HCT116 (cell line): ENCODE measurements at regions of chr22 and their contacts with region 1.

Region 1: GRCh38 chr22:29154364-29155048 is 51.2 kb upstream of the EMID1 start:
- DNase-seq: peak; percentile 34
- ATAC-seq: peak; percentile 92
- H3K4me3 ChIP-seq: peak overlapping the region; percentile 9 to 17; a peak in 3 of 4 replicates
- H3K27ac ChIP-seq: no peak overlapping the region
- H3K4me1 ChIP-seq: peaks cover 3 to 8% of the 10 kb centered on the region in 2 experiments; a peak in 2 of 4 replicates
- H3K27me3 ChIP-seq: no peaks in the 10 kb centered on the region
- CTCF ChIP-seq: peak; percentile 75 to 94 (median 93)
- POLR2A ChIP-seq: no peak
- RAD21 ChIP-seq: peak; percentile 82

Region 2: DNA sequence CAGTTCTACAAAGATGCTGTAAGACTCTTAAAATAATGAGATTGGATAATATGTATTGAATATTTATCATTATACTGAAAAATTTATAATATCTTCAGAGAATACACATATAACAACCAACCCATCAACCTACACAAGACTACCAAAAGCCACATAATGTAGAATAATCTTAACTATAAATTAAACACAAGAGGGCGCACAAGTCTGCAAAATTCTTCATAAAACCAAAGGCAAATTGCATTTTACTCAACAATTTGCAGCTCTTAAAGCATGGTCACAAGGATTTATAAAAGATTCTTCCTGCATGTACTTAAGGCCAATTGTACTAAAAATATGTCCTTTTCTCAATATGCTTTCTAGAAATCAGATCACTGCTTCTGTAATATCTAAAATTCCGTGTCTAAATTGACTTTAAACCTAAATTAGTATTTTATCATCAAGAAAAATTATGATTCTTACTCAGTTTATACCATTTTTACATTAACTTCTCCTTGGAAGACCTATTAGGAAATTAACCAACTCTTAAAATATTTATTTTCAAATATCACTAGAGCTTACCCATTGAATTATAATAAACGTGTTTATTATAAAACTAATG is 553.9 kb before region 1 on chr22:
- CTCF ChIA-PET with region 1: interaction called, 7 read pairs
- POLR2A ChIA-PET with region 1: no interaction called
- RAD21 ChIA-PET with region 1: interaction called in 1 of 2 experiments, 3 read pairs
- intact Hi-C with region 1: loop called (anchors 1 kb)
- DNase-seq: peak; percentile 24
- ATAC-seq: peak; percentile 58
- H3K4me3 ChIP-seq: no peak overlapping the region
- H3K27ac ChIP-seq: no peak overlapping the region
- H3K4me1 ChIP-seq: no peaks in the 10 kb centered on the region
- H3K27me3 ChIP-seq: no peaks in the 10 kb centered on the region
- CTCF ChIP-seq: peak; percentile 12 to 53 (median 52); a peak in 4 of 6 replicates
- POLR2A ChIP-seq: no peak
- RAD21 ChIP-seq: peak; percentile 74

Region 3: GRCh38 chr22:28800308-28801077 is 354.0 kb before region 1 on chr22 and contains the start of gene XBP1:
- CTCF ChIA-PET with region 1: no interaction called
- POLR2A ChIA-PET with region 1: no interaction called
- RAD21 ChIA-PET with region 1: no interaction called
- intact Hi-C with region 1: loop called (anchors 5 kb)
- DNase-seq: peak; percentile 79
- ATAC-seq: peak; percentile 97
- H3K4me3 ChIP-seq: peak within 1 kb of the TSS; percentile 91 to 95
- H3K27ac ChIP-seq: peak within 1 kb of the TSS; percentile 82
- H3K4me1 ChIP-seq: peaks cover 7 to 20% of the 10 kb centered on the region in 2 experiments
- H3K27me3 ChIP-seq: no peaks in the 10 kb centered on the region
- CTCF ChIP-seq: no peak
- POLR2A ChIP-seq: peak; percentile 96
- RAD21 ChIP-seq: no peak
- total RNA-seq, gene XBP1: 81.3 TPM

Region 4: DNA sequence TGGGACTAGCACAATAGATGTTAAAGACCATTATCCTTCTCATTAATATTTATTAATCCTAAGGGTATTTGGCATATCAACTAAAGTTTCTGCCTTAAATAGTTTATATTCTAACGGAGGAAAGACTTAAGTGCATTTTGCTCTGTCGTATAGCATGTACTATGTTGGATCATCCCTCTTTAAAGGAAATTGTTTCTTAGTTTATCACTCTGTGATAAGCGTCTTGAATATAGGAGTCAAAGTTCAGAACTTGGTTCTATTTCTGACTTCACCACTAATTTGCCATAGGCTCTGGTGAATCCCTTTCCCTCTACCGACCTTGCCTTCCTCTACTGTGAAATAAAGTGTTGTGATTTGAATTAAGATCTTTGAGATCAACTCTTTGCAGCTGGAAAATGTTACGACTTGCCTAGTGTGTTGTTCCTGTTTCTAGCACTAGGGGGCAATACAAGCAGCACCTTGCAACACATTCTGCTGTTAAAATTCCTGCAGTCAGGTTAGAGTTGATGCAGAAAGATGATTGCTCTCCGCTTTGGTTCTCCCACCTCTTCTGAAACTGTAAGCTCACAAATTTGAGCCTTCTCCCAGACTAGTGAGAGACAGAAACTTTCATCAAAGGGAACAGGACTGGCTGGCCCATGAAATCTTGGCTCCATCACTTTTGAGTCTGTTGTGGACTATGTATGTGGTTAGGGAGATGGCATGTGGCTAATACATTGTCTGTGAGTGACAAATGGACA is 299.0 kb before region 1 on chr22:
- CTCF ChIA-PET with region 1: interaction called, 3 read pairs
- POLR2A ChIA-PET with region 1: no interaction called
- RAD21 ChIA-PET with region 1: no interaction called
- intact Hi-C with region 1: loop called (anchors 5 kb)
- DNase-seq: peak; percentile 73
- ATAC-seq: peak; percentile 80
- H3K4me3 ChIP-seq: no peak overlapping the region
- H3K27ac ChIP-seq: no peak overlapping the region
- H3K4me1 ChIP-seq: peaks cover 22 to 23% of the 10 kb centered on the region in 2 experiments
- H3K27me3 ChIP-seq: no peaks in the 10 kb centered on the region
- CTCF ChIP-seq: peak; percentile 82 to 93 (median 90)
- POLR2A ChIP-seq: no peak
- RAD21 ChIP-seq: peak; percentile 92

Region 5: GRCh38 chr22:29216873-29217666 is 62.6 kb after region 1 on chr22:
- CTCF ChIA-PET with region 1: no interaction called
- POLR2A ChIA-PET with region 1: no interaction called
- RAD21 ChIA-PET with region 1: no interaction called
- intact Hi-C with region 1: no loop called
- DNase-seq: no peak
- ATAC-seq: no peak
- H3K4me3 ChIP-seq: no peak overlapping the region
- H3K27ac ChIP-seq: no peak overlapping the region
- H3K4me1 ChIP-seq: no peaks in the 10 kb centered on the region
- H3K27me3 ChIP-seq: no peaks in the 10 kb centered on the region
- CTCF ChIP-seq: no peak
- POLR2A ChIP-seq: no peak
- RAD21 ChIP-seq: no peak